Dorsolateral prefrontal cortex (tissue), 120 donors: ENCODE measurements at regions of chr1 and their contacts with region 1.

Region 1: DNA sequence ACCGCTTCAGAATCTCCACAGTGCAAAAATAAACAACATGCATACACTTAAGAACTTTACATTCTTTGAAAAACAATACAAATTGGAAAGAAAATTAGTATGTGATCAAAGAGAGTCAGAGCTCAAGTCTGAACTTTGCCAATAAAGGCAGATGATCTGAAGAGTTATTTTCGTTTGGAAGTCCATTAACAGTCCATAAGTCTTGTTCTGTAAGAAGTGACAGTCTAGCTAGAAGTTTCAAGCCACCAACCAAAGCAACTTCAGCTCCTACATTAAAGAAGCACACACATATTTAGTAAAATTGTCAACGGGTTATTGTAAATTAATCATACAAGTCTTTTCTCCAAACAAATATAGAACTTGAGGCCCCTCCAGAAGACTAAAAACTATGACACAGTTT is 20.7 kb downstream of the ANGEL2 start:
- DNase-seq: no peak
- H3K4me3 ChIP-seq: no peak overlapping the region
- H3K27ac ChIP-seq: peak overlapping the region in 5 of 59 donors; percentile 3 to 22 (median 9)
- H3K27me3 ChIP-seq: no peaks in the 10 kb centered on the region
- CTCF ChIP-seq: no peak

Region 2: GRCh38 chr1:212665241-212666115 is 329.4 kb before region 1 on chr1:
- intact Hi-C with region 1: loop called in 1 of 2 experiments (anchors 5 kb)
- DNase-seq: peak; percentile 26 to 85 (median 62)
- H3K4me3 ChIP-seq: peak overlapping the region; percentile 35 to 82 (median 64)
- H3K27ac ChIP-seq: peak overlapping the region in 39 of 59 donors; percentile 11 to 89 (median 66)
- H3K27me3 ChIP-seq: no peaks in the 10 kb centered on the region
- CTCF ChIP-seq: peak; percentile 56 to 99 (median 93)